ENCODE measurements at regions of chr20 and their contacts with region 1.

Region 1: DNA sequence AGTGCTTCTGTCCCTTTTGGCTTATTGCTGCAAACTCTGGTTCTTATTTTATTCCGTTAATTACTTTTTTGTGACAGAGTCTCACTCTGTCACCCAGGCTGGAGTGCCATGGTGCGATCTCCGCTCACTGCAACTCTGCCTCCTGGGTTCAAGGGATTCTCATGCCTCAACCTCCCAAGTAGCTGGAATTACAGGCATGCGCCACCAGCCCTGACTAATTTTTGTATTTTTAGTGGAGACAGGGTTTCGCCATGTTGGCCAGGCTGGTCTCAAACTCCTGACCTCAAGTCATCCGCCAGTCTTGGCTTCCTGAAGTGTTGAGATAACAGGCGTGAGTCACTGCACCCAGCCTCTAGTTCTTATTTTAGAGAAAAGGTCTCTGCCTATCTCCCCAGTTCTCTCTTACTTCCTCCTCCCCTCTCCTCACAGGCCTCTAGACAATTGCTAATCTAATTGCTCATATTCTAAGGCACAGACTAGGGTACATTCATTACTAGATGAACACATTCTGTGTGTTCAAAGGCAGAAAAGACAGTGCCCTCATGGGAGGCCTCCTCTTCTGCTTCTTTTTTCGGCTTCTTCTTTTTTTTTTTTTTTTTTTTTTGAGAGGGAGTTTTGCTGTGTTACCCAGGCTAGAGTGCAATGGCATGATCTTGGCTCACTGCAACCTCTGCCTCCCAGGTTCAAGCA is 27.0 kb downstream of the EDEM2 start:
- DNase-seq: no peak
- H3K4me3 ChIP-seq: no peak overlapping the region
- H3K27ac ChIP-seq: no peak overlapping the region
- H3K4me1 ChIP-seq: no peaks in the 10 kb centered on the region
- H3K27me3 ChIP-seq: no peaks in the 10 kb centered on the region
- CTCF ChIP-seq: no peak

Region 2: GRCh38 chr20:35135867-35136586 is 15.9 kb after region 1 on chr20:
- CTCF ChIA-PET with region 1: no interaction called
- POLR2A ChIA-PET with region 1: no interaction called
- intact Hi-C with region 1: no loop called
- DNase-seq: no peak
- H3K4me3 ChIP-seq: no peak overlapping the region
- H3K27ac ChIP-seq: no peak overlapping the region
- H3K4me1 ChIP-seq: no peaks in the 10 kb centered on the region
- H3K27me3 ChIP-seq: no peaks in the 10 kb centered on the region
- CTCF ChIP-seq: no peak

Region 3: GRCh38 chr20:35269055-35269781 is 149.1 kb after region 1 on chr20:
- CTCF ChIA-PET with region 1: interaction called, 14 read pairs
- POLR2A ChIA-PET with region 1: no interaction called
- intact Hi-C with region 1: no loop called
- DNase-seq: peak; percentile 62
- H3K4me3 ChIP-seq: no peak overlapping the region
- H3K27ac ChIP-seq: no peak overlapping the region
- H3K4me1 ChIP-seq: no peaks in the 10 kb centered on the region
- H3K27me3 ChIP-seq: no peaks in the 10 kb centered on the region
- CTCF ChIP-seq: peak; percentile 87

Region 4: GRCh38 chr20:35741892-35742740 is 622.0 kb after region 1 on chr20 and contains the start of gene RBM39:
- CTCF ChIA-PET with region 1: no interaction called
- POLR2A ChIA-PET with region 1: no interaction called
- intact Hi-C with region 1: no loop called
- DNase-seq: peak; percentile 100
- H3K4me3 ChIP-seq: peak within 1 kb of the TSS; percentile 69
- H3K27ac ChIP-seq: peak within 1 kb of the TSS; percentile 99
- H3K4me1 ChIP-seq: peaks cover 29% of the 10 kb centered on the region
- H3K27me3 ChIP-seq: no peaks in the 10 kb centered on the region
- CTCF ChIP-seq: peak; percentile 43; the same call in 1 of the 2 replicates
- total RNA-seq, gene RBM39: 316 and 329 TPM in 2 replicates